Endothelial cell of umbilical vein (primary cell): ENCODE measurements at regions of chrX and their contacts with region 1.

Region 1: DNA sequence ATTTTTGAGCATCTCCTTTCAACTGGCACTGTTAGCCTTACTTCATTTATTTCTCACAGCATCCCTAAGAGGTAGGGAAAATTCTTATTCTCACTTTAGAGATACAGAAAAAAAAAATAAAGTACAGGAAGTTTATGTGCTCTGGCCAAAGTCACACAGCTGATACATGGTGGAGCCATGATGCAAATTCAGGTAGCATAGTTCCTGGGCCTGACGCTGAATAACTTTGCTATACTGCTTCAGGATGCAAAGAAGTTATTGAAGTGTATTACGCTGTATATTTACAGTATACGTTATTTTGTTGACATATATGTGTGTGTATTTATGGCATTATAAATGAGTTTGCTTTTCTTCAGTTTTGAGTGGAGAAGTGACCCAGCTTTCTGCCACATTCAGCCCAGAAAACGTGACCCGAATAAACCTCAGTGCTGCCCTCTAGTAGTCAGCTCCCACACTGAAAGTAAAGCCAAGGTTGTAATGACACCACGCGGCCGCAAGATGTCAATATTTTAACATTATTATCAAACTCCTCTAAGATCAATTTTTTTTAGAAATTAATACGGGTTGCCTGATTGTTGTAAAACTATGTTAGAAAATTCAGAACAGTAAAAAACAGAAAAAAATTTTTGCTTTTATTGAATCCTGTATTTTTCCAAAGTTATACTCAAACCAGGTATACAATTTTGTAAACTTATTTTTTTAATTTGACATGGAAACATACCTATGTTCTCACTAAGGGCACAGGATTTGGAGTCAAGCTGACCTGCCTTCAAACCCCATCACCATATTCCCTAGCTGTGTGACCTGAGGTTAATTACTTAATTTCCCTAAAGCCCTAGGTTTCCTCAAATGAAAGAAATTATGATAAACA is 3.8 kb upstream of the GUCY2F start:
- DNase-seq: peak; percentile 77
- H3K4me3 ChIP-seq: no peak overlapping the region
- H3K27ac ChIP-seq: no peak overlapping the region
- H3K4me1 ChIP-seq: no peaks in the 10 kb centered on the region
- H3K27me3 ChIP-seq: peaks cover 5 to 6% of the 10 kb centered on the region in 2 experiments
- CTCF ChIP-seq: peak; percentile 71 to 83
- POLR2A ChIP-seq: no peak

Region 2: GRCh38 chrX:109624641-109625616 is 139.2 kb after region 1 on chrX and contains the start of gene KCNE5:
- CTCF ChIA-PET with region 1: interaction called, 8 read pairs
- POLR2A ChIA-PET with region 1: interaction called, 3 read pairs
- dilution Hi-C with region 1: no loop called
- intact Hi-C with region 1: loop called (anchors 1 kb)
- DNase-seq: no peak
- H3K4me3 ChIP-seq: peak within 1 kb of the TSS in 1 of 3 experiments; percentile 25
- H3K27ac ChIP-seq: no peak within 1 kb of the TSS
- H3K4me1 ChIP-seq: peaks cover 7% of the 10 kb centered on the region
- H3K27me3 ChIP-seq: no peaks in the 10 kb centered on the region
- CTCF ChIP-seq: no peak
- POLR2A ChIP-seq: no peak
- total RNA-seq, gene KCNE5: 0.31 and 0.44 TPM in 2 replicates

Region 3: DNA sequence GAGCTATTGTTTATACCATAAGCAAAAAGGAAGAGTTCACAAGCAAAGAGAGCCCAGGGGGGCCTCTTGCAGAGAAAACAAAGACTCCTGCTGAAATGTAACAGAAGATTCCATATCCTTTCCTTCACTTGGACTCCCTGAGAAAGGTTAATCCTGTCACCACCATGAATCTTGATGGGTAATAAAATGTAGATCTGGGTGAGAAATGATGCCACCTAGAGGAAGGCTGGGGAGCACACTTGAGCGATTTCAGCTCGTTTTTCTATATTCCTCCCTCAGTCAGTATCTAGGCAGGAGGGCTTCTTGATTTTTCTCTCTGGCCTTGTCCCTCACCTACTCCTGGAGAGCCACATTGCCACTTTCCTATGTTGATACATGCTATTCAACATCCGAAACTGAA is 149.5 kb after region 1 on chrX:
- CTCF ChIA-PET with region 1: interaction called, 32 read pairs
- POLR2A ChIA-PET with region 1: no interaction called
- dilution Hi-C with region 1: no loop called
- intact Hi-C with region 1: loop called (anchors 1 kb)
- DNase-seq: peak; percentile 31
- H3K4me3 ChIP-seq: no peak overlapping the region
- H3K27ac ChIP-seq: no peak overlapping the region
- H3K4me1 ChIP-seq: no peaks in the 10 kb centered on the region
- H3K27me3 ChIP-seq: no peaks in the 10 kb centered on the region
- CTCF ChIP-seq: peak; percentile 32 to 48
- POLR2A ChIP-seq: no peak